PC-9 (cell line): ENCODE measurements at regions of chr7 and their contacts with region 1.

Region 1: DNA sequence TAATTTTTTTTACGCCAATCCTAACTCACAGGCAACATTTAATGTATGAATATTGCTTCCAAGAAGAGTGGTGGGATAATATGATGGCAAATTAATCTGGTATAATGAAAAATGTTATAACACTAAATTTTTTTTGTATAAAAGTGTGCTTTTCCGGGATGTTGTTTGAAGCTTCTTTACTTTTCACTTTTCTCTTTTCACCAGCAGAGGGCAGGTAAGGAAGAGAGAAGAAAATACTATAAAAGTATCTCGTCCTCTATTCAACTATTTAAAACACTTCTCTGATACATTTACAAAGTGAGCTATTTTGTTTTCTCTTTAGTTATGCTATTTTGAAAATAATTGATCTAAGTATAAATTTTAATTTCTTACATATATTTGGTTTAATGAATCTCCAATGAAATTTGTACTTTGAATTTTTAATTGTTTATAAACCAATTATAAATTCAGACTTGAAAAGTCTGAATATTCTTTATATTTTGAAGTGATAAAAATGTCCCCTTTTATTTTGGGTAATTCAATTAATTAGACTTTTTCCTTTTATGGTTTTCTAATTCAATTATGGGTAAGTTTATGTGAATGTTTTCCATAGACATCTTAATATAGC is 20.7 kb upstream of the CFTR start:
- DNase-seq: no peak
- H3K4me3 ChIP-seq: no peak overlapping the region
- H3K27ac ChIP-seq: no peak overlapping the region
- H3K4me1 ChIP-seq: no peaks in the 10 kb centered on the region
- H3K27me3 ChIP-seq: no peaks in the 10 kb centered on the region
- CTCF ChIP-seq: peak; percentile 76

Region 2: GRCh38 chr7:117600911-117601310 is 141.8 kb after region 1 on chr7:
- CTCF ChIA-PET with region 1: no interaction called
- POLR2A ChIA-PET with region 1: no interaction called
- intact Hi-C with region 1: no loop called
- DNase-seq: peak in 1 of 2 experiments; percentile 37
- H3K4me3 ChIP-seq: no peak overlapping the region
- H3K27ac ChIP-seq: no peak overlapping the region
- H3K4me1 ChIP-seq: no peaks in the 10 kb centered on the region
- H3K27me3 ChIP-seq: no peaks in the 10 kb centered on the region
- CTCF ChIP-seq: no peak

Region 3: DNA sequence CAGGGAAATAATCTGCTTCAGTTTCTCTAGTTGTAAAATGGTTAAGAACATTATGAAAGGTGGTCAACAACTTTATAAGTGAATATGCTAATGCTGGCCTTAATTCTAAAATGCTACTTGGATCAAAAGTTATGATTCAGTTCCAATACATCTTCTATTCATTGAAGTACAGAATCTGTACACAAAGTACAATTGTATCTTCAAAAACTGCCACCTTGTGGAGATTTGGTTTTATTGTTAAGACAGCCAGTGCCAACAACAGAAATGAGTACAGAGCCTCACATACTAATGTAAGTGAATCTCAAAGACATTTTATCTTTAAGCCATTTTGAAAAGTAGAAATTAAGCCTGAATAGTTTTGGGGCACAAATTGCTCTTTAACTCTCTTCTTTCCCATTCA is 214.8 kb after region 1 on chr7:
- CTCF ChIA-PET with region 1: interaction called, 5 read pairs
- POLR2A ChIA-PET with region 1: interaction called, 4 read pairs
- intact Hi-C with region 1: loop called (anchors 1 kb)
- DNase-seq: no peak
- H3K4me3 ChIP-seq: no peak overlapping the region
- H3K27ac ChIP-seq: no peak overlapping the region
- H3K4me1 ChIP-seq: no peaks in the 10 kb centered on the region; the same call in 1 of the 2 replicates
- H3K27me3 ChIP-seq: no peaks in the 10 kb centered on the region
- CTCF ChIP-seq: peak; percentile 34; the same call in 1 of the 2 replicates